Tibial artery (tissue), 4 donors: ENCODE measurements at regions of chr11 and their contacts with region 1.

Region 1: GRCh38 chr11:14249121-14249963 is 109.6 kb downstream of the RRAS2 start:
- DNase-seq: peak in 1 of 2 donors; percentile 51
- H3K4me3 ChIP-seq: no peak overlapping the region
- H3K27ac ChIP-seq: no peak overlapping the region
- H3K4me1 ChIP-seq: no peaks in the 10 kb centered on the region
- H3K27me3 ChIP-seq: peaks cover 0 to 21% of the 10 kb centered on the region in 2 donors
- CTCF ChIP-seq: peak; percentile 80 to 89

Region 2: DNA sequence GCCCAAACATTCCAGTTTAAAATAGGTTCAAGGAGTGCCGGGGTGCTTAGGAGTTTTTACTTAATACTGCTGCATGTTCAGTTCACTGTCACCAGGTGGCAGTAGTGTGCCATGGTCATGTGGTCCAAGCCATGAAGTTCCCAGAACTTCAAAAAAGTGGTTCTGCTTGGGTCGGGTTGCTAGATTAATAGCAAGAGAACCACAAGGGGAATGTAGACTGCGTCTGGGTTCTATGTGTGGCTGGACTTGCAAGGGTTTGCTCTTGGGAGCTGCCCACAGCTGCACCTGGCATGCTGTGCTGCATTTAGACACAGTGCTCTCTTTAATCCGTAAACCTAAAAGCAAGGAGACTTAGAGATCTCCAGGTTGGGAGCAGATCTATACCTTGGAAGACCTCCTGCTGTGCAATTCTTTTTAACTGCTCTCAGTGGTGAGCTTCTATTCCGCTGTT is 293.3 kb before region 1 on chr11:
- intact Hi-C with region 1: loop called (anchors 2 kb)
- DNase-seq: peak; percentile 56 to 69
- H3K4me3 ChIP-seq: no peak overlapping the region
- H3K27ac ChIP-seq: no peak overlapping the region
- H3K4me1 ChIP-seq: no peaks in the 10 kb centered on the region
- H3K27me3 ChIP-seq: peaks cover 0 to 19% of the 10 kb centered on the region in 2 donors
- CTCF ChIP-seq: peak; percentile 87 to 91

Region 3: DNA sequence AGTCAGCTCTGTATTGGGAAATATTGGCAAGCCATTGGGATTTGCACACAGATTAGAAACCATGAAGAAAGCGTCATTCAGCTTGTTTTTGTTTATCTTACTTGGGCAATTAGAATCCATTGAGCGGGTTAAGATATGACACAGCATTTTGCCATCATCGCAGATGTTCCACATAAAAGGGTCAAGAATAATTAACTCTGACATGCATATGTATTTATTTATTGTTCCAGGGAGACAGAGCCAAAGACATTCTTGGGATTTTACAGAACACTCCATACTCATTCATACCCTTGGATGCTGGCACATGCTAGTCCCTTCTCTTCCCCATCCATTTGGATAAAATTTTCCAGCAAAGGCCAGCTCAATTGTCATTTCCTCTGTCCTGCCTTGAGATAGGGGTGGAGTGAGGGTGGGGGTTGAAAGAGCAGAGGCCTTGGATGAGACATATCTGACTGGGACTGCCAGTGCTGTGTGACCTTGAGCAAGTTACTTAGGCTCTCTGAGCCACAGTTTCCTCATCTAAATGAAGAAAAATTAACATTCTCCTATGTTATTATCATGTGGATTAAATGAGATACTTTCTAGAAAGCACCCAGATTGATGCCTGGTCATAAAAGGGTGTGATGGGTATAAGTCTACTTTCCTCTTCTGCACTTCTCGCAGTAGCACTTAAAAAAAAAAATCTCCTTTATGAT is 70.1 kb before region 1 on chr11:
- intact Hi-C with region 1: no loop called
- DNase-seq: no peak
- H3K4me3 ChIP-seq: no peak overlapping the region
- H3K27ac ChIP-seq: no peak overlapping the region
- H3K4me1 ChIP-seq: no peaks in the 10 kb centered on the region
- H3K27me3 ChIP-seq: no peaks in the 10 kb centered on the region
- CTCF ChIP-seq: no peak